ENCODE measurements at regions of chr6 and their contacts with region 1.

Region 1: DNA sequence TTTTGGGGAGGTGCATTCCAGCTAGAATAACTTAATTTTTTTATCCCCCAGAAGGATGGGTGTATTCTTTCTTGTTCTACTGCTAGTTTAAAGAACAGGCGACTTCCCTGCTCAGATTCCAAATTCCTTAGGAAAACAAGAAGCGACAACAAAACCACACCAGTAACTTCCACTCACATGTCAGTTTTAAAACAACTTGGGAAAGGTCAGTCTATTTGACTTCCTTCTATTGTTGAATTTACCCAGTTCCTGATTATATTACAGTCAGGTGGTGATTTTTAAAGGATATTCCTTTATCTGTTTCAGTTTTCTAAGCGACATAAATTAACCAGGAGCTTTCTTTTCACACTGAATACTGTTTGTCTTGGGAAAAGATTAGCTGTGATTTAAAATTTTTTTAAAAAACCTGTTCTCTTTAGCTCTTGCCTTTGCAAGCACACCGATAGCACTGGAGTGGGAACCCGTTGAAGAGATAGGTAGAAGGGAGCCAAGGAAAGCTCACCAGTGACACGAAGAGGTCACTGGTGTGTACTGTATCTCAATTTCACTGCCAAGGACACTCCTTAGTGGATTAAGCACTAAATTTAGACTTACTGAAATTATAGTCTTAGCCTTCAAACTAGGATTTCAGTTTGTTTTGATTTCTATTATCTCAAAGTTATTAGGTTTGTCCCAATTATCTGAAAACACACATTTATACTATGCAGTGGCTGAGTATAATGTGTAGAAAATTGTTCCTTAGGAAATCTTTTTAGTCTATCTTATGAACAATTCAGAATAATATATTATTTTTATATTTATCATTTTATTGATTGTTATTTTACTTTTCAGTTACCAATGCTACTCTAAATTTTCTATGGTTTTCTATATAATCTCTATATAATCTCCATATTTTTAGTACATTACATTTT is 22.3 kb downstream of the MARCKS start:
- DNase-seq: peak; percentile 67
- ATAC-seq: peak; percentile 100
- H3K4me3 ChIP-seq: no peak overlapping the region
- H3K27ac ChIP-seq: no peak overlapping the region
- H3K4me1 ChIP-seq: peaks cover 13% of the 10 kb centered on the region
- H3K27me3 ChIP-seq: no peaks in the 10 kb centered on the region; a peak in 1 of 5 replicates
- CTCF ChIP-seq: peak; percentile 87
- EP300 ChIP-seq: no peak
- POLR2A ChIP-seq: no peak
- RAD21 ChIP-seq: peak; percentile 77

Region 2: DNA sequence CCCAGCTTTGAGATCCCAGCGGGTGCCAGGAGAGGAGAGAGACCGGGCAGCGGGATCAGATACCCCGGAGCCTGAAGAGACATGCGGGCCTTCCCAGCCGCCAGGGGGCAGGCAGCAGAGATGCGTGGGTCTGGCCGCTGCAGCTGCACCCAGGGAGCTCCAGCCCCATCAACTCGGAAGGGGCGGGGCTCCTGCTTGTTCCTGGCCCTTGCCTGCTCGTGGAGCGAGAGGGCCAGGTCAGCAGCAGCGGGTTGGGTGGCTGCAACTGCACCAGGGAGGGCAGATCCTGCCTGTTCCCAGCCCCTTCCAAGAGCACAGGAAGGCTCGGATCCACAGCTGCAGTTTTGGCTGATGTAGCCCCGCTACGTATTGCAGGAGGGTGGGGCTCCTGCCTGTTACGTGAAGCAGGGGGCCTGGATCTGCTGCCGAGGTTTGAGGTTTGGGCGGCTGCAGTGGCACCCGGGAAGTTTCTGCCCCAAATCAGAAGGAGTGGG is 999.5 kb before region 1 on chr6:
- CTCF ChIA-PET with region 1: interaction called, 23 read pairs
- POLR2A ChIA-PET with region 1: interaction called, 4 read pairs
- in situ Hi-C with region 1: no loop called
- intact Hi-C with region 1: loop called (anchors 1 kb)
- DNase-seq: peak; percentile 85
- ATAC-seq: peak; percentile 100
- H3K4me3 ChIP-seq: peak overlapping the region; percentile 57 to 79 (median 79)
- H3K27ac ChIP-seq: no peak overlapping the region
- H3K4me1 ChIP-seq: 0 out of 2 replicates have a peak, but pooled peaks cover 6% of the 10 kb centered on the region
- H3K27me3 ChIP-seq: no peaks in the 10 kb centered on the region; a peak in 1 of 5 replicates
- CTCF ChIP-seq: peak; percentile 99
- EP300 ChIP-seq: no peak
- POLR2A ChIP-seq: peak; percentile 30 to 73; a peak in 2 of 4 replicates
- RAD21 ChIP-seq: peak; percentile 97

Region 3: GRCh38 chr6:113414511-113414910 is 464.9 kb before region 1 on chr6:
- CTCF ChIA-PET with region 1: no interaction called
- POLR2A ChIA-PET with region 1: no interaction called
- in situ Hi-C with region 1: no loop called
- intact Hi-C with region 1: loop called (anchors 1 kb)
- DNase-seq: peak; percentile 40
- ATAC-seq: peak; percentile 92
- H3K4me3 ChIP-seq: no peak overlapping the region
- H3K27ac ChIP-seq: no peak overlapping the region
- H3K4me1 ChIP-seq: no peaks in the 10 kb centered on the region
- H3K27me3 ChIP-seq: no peaks in the 10 kb centered on the region
- CTCF ChIP-seq: peak; percentile 58
- EP300 ChIP-seq: no peak
- POLR2A ChIP-seq: no peak
- RAD21 ChIP-seq: peak; percentile 48

Measured in HepG2 (cell line).